ENCODE measurements at regions of chr3 and their contacts with region 1.

Region 1: GRCh38 chr3:138347960-138348753 is at the start of gene MRAS:
- DNase-seq: peak in 12 of 35 experiments; percentile 1 to 41 (median 15)
- ATAC-seq: peak; percentile 59 to 82 (median 67)
- H3K4me3 ChIP-seq: peak within 1 kb of the TSS; percentile 47 to 70
- H3K4me3 Mint-ChIP-seq: peak within 1 kb of the TSS; percentile 82 to 90 (median 88)
- H3K27ac ChIP-seq: no peak within 1 kb of the TSS
- H3K27ac Mint-ChIP-seq: peak within 1 kb of the TSS in 1 of 2 donors; percentile 27
- H3K4me1 ChIP-seq: peaks cover 0 to 8% of the 10 kb centered on the region in 2 experiments
- H3K4me1 Mint-ChIP-seq: peaks cover 10 to 13% (median 11%) of the 10 kb centered on the region in 3 donors
- H3K27me3 ChIP-seq: peaks cover 0 to 49% of the 10 kb centered on the region in 2 experiments
- H3K27me3 Mint-ChIP-seq: peaks cover 17 to 46% of the 10 kb centered on the region in 2 donors
- total RNA-seq, gene MRAS: 0.28 to 0.49 (median 0.42) TPM in 4 of 5 donors, not detected in the other

Region 2: DNA sequence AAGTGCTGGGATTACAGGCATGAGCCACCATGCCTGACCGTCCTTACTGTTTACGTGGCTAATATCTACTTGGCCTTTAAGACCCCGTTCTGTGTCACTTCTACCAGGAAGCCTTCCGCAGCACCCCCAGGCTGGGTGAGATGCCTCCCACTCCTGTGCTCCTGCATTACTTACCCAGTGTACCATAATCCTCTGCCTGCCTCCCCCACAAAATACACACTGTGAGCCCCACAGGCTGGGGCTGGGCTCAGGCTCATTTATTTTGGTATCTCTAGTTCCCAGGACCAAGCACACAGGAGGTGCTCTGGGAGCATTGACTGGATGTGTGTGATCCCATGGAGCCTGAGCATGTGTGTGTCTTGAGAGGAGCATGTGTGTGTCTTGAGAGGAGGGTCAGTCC is 15.2 kb after region 1 on chr3:
- CTCF ChIA-PET with region 1: interaction called, 3 to 10 read pairs
- POLR2A ChIA-PET with region 1: interaction called in 1 of 2 experiments, 4 read pairs
- DNase-seq: no peak
- ATAC-seq: no peak
- H3K4me3 ChIP-seq: no peak overlapping the region
- H3K4me3 Mint-ChIP-seq: no peak overlapping the region
- H3K27ac ChIP-seq: no peak overlapping the region
- H3K27ac Mint-ChIP-seq: no peak overlapping the region
- H3K4me1 ChIP-seq: no peaks in the 10 kb centered on the region
- H3K4me1 Mint-ChIP-seq: peaks cover 0 to 4% (median 0%) of the 10 kb centered on the region in 3 donors
- H3K27me3 ChIP-seq: peaks cover 0 to 13% of the 10 kb centered on the region in 2 experiments
- H3K27me3 Mint-ChIP-seq: peaks cover 5 to 11% of the 10 kb centered on the region in 2 donors

Region 3: DNA sequence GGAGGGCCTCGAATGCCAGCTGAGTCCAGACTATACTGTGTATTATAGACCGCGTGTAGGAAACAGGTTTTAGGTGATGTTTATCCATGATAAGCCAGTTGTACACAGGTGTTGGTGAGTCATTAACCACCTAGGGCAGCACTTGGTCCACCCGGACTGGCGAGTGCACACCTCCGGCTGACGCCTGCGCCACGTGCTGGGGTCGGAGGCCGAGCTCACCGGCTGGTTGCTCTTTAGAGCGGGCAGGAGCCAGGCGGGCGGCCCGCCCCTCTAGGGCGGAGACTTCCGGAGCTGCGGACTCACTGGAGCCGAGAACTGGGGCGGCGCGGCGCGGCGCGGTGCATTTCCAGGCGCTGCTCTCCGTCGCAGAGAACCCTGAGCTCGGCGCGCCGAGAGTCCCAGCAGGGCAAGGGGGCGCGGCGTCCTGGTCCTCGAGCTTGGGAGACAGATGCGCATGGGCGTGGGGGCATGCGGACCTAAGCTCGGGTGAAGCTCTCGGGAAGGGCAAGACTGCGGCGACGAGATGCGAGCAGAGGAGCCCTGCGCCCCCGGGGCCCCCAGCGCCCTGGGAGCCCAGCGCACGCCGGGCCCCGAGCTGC is 86.2 kb after region 1 on chr3 and contains the start of gene ESYT3:
- CTCF ChIA-PET with region 1: no interaction called
- POLR2A ChIA-PET with region 1: no interaction called
- DNase-seq: peak in 20 of 35 experiments; percentile 3 to 44 (median 11)
- ATAC-seq: peak; percentile 69 to 84 (median 77)
- H3K4me3 ChIP-seq: peak within 1 kb of the TSS; percentile 38 to 65
- H3K4me3 Mint-ChIP-seq: peak within 1 kb of the TSS; percentile 66 to 70 (median 67)
- H3K27ac ChIP-seq: no peak within 1 kb of the TSS
- H3K27ac Mint-ChIP-seq: no peak within 1 kb of the TSS
- H3K4me1 ChIP-seq: peaks cover 0 to 22% of the 10 kb centered on the region in 2 experiments
- H3K4me1 Mint-ChIP-seq: peaks cover 0 to 18% (median 16%) of the 10 kb centered on the region in 3 donors
- H3K27me3 ChIP-seq: peaks cover 5 to 52% of the 10 kb centered on the region in 2 experiments
- H3K27me3 Mint-ChIP-seq: peaks cover 40 to 63% of the 10 kb centered on the region in 2 donors
- total RNA-seq, gene ESYT3: 0.10 to 0.20 TPM in 2 of 5 donors, not detected in the others

Measured in T-cell (primary cell).